AG04449 (cell line): ENCODE measurements at regions of chr7 and their contacts with region 1.

Region 1: DNA sequence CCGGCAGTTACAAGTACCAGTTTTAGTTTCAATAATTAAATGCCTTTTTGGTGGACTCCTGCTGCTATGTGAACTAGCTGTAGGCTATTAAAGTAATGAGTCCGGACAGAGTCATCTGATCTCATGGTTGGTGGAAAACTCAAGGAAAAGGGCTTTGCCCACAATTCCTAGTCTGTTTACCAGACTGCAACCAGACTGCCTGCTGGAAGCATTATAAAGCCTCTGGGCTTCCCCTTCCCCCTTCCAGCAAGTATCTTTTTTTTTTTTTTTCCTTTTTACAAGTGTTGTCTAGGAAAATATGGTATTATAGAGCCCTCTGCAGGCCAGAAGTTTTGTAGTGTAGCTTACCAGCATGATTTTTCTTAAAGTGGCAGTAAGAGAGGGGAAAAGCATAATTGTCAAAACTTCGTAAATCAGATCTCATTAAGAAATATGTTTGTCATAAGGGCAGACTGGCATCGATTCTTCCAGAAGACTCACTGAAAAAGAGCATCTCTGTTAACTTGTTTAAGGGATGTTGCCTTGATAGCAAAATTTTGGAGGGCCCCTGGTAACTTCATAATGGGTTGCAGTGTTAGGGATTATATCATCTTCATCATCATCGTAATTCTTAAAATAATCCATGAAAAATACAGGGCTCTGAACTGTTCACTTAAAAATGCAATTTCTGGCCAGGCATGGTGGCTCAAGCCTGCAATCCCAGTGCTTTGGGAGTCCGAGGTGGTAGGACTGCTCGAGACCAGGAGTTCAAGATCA is 181.3 kb downstream of the TAX1BP1 start:
- DNase-seq: peak; percentile 71
- H3K4me3 ChIP-seq: no peak overlapping the region
- CTCF ChIP-seq: peak; percentile 18

Region 2: GRCh38 chr7:27910326-27910725 is 10.9 kb before region 1 on chr7:
- CTCF ChIA-PET with region 1: interaction called, 12 read pairs
- POLR2A ChIA-PET with region 1: no interaction called
- DNase-seq: no peak
- H3K4me3 ChIP-seq: no peak overlapping the region
- CTCF ChIP-seq: no peak

Region 3: GRCh38 chr7:27933671-27934565 is 12.7 kb after region 1 on chr7:
- CTCF ChIA-PET with region 1: interaction called, 12 read pairs
- POLR2A ChIA-PET with region 1: interaction called, 3 read pairs
- DNase-seq: no peak
- H3K4me3 ChIP-seq: no peak overlapping the region
- CTCF ChIP-seq: no peak

Region 4: DNA sequence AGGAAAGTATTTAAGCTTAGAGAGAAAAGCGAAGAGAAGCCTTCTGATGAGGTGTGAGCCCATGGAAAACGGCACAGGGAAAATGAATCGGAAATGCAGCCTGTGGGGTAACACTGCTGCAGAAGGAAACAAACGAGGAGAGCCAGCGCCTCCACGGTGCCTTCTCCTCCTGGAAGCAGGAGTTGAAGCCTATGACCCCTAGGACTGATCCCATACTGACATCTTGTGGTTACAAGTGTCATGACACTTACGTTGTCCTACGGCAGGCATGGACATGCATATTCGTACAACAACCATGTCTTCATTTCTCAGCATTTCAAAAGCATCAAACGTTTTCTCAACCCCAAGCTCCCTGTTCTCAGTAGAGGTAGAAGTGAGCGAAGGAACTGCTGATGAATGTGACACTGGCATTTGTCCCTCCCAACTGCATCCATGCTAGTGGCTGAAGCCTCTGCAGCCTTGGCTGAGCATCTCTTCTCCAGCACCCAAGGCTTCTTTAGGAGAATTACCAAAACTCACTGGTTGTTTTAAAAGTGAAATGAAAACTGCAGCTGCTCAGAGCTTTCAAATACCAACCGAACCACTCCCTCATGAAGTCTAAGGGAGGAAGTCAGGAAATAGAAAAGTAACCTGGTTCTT is 99.2 kb after region 1 on chr7:
- CTCF ChIA-PET with region 1: interaction called, 17 read pairs
- POLR2A ChIA-PET with region 1: no interaction called
- DNase-seq: no peak
- H3K4me3 ChIP-seq: no peak overlapping the region
- CTCF ChIP-seq: peak; percentile 80